Mammary epithelial cell (primary cell): ENCODE measurements at regions of chr15 and their contacts with region 1.

Region 1: DNA sequence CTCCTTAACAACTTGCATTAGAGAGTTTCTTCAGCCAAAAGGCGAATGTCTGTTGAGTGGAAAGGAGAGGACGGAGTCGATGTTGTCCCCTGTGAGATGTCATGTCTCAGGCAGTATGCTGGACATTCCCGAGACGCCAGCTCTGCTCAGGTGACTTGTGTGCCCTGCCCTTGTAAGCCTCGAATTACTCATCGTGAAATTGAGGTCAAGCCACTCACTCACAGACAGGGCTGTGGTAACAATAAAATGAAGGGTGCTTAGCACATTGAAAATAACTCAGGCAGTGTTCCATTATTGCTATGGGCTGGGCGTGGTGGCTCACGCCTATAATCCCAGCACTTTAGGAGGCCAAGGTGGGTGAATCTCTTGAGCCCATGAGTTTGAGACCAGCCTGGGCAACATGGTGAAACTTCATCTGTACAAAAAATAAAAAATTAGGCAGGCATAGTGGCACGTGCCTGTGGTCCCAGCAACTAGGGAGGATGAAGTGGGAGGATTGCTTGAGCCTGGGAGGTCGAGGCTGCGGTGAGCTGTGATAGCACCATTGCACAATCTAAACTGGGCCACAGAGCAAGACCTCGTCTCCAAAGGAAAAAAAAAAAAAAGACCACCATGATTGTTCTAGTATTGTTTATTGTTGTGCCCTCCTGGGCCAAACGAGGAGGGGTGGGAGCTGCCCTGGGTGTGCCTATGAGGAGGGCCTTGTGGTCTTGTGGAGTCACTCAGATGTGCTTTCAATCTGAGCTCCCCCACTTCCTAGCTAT is 214.4 kb downstream of the THSD4 start:
- DNase-seq: peak; percentile 91
- H3K4me3 ChIP-seq: no peak overlapping the region
- H3K27ac ChIP-seq: peak overlapping the region; percentile 59
- H3K4me1 ChIP-seq: peaks cover 32% of the 10 kb centered on the region
- H3K27me3 ChIP-seq: no peaks in the 10 kb centered on the region
- CTCF ChIP-seq: no peak

Region 2: GRCh38 chr15:69502470-69503045 is 1827.1 kb before region 1 on chr15:
- CTCF ChIA-PET with region 1: no interaction called
- dilution Hi-C with region 1: no loop called
- in situ Hi-C with region 1: no loop called
- intact Hi-C with region 1: no loop called
- DNase-seq: no peak
- H3K4me3 ChIP-seq: no peak overlapping the region
- H3K27ac ChIP-seq: no peak overlapping the region
- H3K4me1 ChIP-seq: no peaks in the 10 kb centered on the region
- H3K27me3 ChIP-seq: peaks cover 3% of the 10 kb centered on the region
- CTCF ChIP-seq: peak in 1 of 2 donors; percentile 13

Region 3: DNA sequence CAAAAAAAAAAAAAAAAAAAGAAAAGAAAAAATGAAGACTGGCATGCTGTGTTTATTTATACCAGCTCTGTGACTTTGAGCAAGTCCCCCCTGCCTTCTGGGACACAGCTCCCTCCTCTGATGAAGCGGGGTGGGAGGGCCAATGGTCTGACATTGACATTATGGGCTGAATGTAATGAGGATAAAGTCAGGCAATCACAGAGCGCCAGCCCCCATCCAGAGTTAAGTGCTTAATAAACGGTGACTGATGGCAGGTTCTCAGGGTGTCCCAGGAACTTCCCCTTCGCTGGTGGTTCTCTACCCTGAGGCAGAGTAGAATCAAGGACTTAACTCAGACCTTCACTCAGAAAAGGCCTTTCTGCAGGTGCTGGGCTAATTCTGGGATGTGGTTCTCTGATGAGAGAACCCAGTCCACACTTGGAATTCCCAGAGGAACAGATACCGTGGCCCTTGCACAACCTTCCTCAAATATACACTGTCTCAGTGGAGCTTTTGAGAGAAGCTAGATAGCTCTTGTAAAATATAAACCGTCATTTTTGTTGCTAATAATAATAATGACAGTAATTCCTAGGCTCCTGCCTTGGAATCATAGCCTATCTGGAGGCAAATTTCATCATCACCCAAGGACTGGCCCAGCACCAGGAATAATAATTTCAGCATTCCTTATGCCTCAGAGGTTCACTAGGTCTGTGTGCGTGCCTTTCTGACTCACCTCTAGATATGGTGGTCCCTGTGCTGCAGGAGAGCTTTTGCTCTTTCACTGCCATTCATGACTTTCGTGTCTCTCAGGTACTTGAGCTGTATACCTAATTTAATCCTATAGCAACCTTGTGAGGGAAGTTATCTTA is 1761.3 kb before region 1 on chr15:
- CTCF ChIA-PET with region 1: no interaction called
- dilution Hi-C with region 1: no loop called
- in situ Hi-C with region 1: no loop called
- intact Hi-C with region 1: loop called (anchors 10 kb)
- DNase-seq: peak; percentile 32
- H3K4me3 ChIP-seq: no peak overlapping the region
- H3K27ac ChIP-seq: no peak overlapping the region
- H3K4me1 ChIP-seq: no peaks in the 10 kb centered on the region
- H3K27me3 ChIP-seq: peaks cover 3% of the 10 kb centered on the region
- CTCF ChIP-seq: no peak

Region 4: GRCh38 chr15:71151081-71151480 is 178.6 kb before region 1 on chr15:
- CTCF ChIA-PET with region 1: no interaction called
- dilution Hi-C with region 1: no loop called
- in situ Hi-C with region 1: no loop called
- intact Hi-C with region 1: no loop called
- DNase-seq: peak; percentile 74
- H3K4me3 ChIP-seq: no peak overlapping the region
- H3K27ac ChIP-seq: peak overlapping the region; percentile 29
- H3K4me1 ChIP-seq: peaks cover 36% of the 10 kb centered on the region
- H3K27me3 ChIP-seq: no peaks in the 10 kb centered on the region
- CTCF ChIP-seq: no peak

Region 5: GRCh38 chr15:71313806-71314205 is 15.9 kb before region 1 on chr15:
- CTCF ChIA-PET with region 1: no interaction called
- dilution Hi-C with region 1: no loop called
- in situ Hi-C with region 1: no loop called
- intact Hi-C with region 1: no loop called
- DNase-seq: no peak
- H3K4me3 ChIP-seq: no peak overlapping the region
- H3K27ac ChIP-seq: no peak overlapping the region
- H3K4me1 ChIP-seq: no peaks in the 10 kb centered on the region
- H3K27me3 ChIP-seq: no peaks in the 10 kb centered on the region
- CTCF ChIP-seq: no peak